Lower leg skin (tissue), 4 donors: ENCODE measurements at regions of chr4 and their contacts with region 1.

Region 1: GRCh38 chr4:19880206-19880605 is 371.5 kb upstream of the SLIT2 start:
- DNase-seq: no peak
- H3K4me3 ChIP-seq: no peak overlapping the region
- CTCF ChIP-seq: no peak
- POLR2A ChIP-seq: no peak

Region 2: DNA sequence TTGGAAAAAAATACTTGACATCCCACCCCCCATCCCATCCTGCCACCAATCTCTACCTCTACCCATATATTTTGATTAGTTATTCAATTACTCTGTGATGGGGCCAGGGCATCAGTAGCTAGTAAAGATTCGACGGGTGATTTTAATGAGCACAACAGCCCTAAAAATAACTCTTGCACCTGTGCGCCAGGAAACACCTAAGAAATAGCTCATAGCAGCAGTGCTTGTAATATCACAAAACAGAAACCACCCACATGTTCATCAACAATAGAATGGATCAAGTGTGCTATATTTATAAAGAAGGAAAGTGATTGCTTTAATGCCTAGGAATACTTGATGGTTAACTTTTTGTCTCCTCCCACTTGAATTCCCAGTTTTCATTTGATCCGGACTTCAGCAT is 1633.0 kb before region 1 on chr4:
- intact Hi-C with region 1: loop called (anchors 5 kb)
- DNase-seq: no peak
- H3K4me3 ChIP-seq: no peak overlapping the region
- CTCF ChIP-seq: no peak
- POLR2A ChIP-seq: no peak

Region 3: GRCh38 chr4:19711871-19712270 is 168.3 kb before region 1 on chr4:
- intact Hi-C with region 1: no loop called
- DNase-seq: no peak
- H3K4me3 ChIP-seq: no peak overlapping the region
- CTCF ChIP-seq: no peak
- POLR2A ChIP-seq: no peak

Region 4: DNA sequence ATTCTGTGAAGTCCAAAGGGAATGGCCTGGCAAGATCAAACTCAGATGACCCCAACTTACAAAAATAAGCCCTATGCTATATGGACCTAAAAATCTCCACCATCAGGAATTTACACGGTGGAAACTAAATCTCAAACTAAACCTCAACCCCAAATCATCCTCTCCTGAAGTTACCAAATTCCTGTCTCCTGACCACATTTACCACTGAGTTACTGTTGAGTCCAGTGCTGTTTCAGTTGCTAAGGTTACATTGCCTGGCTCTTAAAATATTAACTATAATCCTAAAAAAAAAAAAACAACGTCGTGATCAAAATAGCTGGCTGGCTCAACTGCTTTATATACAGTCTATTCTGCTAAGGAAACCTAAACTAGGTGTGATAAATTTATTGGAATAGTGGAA is 56.3 kb after region 1 on chr4:
- intact Hi-C with region 1: no loop called
- DNase-seq: no peak
- H3K4me3 ChIP-seq: no peak overlapping the region
- CTCF ChIP-seq: no peak
- POLR2A ChIP-seq: no peak

Region 5: GRCh38 chr4:20284990-20285389 is 404.8 kb after region 1 on chr4:
- intact Hi-C with region 1: no loop called
- DNase-seq: no peak
- H3K4me3 ChIP-seq: no peak overlapping the region
- CTCF ChIP-seq: no peak
- POLR2A ChIP-seq: no peak